Naive thymus-derived CD4-positive, alpha-beta T cell (primary cell): ENCODE measurements at regions of chrX and their contacts with region 1.

Region 1: DNA sequence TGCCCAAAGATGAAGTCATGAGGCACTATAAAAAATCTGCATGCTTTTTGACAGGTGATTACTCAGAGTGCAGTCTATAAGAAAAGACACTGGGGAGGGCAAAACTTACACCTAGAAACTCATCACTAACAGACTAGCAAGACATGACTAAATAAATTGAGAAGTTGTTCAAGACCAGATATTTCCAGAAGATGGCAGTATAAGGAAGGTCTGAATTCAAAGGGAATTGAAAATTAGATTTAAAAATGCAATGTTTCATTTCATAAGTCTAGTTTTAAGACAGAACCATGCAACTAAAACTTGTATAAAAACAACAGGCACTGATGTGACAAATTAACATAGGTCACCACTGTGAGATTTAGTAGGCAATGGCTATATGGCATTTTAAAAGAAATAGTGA is 232.5 kb upstream of the POF1B start:
- DNase-seq: no peak
- ATAC-seq: no peak
- H3K4me3 ChIP-seq: no peak overlapping the region
- H3K4me3 Mint-ChIP-seq: no peak overlapping the region
- H3K27ac ChIP-seq: no peak overlapping the region
- H3K27ac Mint-ChIP-seq: no peak overlapping the region
- H3K4me1 ChIP-seq: no peaks in the 10 kb centered on the region
- H3K4me1 Mint-ChIP-seq: no peaks in the 10 kb centered on the region
- H3K27me3 ChIP-seq: no peaks in the 10 kb centered on the region
- H3K27me3 Mint-ChIP-seq: no peaks in the 10 kb centered on the region

Region 2: GRCh38 chrX:86133761-86134160 is 521.8 kb after region 1 on chrX:
- CTCF ChIA-PET with region 1: no interaction called
- POLR2A ChIA-PET with region 1: no interaction called
- intact Hi-C with region 1: no loop called
- DNase-seq: no peak
- ATAC-seq: no peak
- H3K4me3 ChIP-seq: no peak overlapping the region
- H3K4me3 Mint-ChIP-seq: no peak overlapping the region
- H3K27ac ChIP-seq: no peak overlapping the region
- H3K27ac Mint-ChIP-seq: no peak overlapping the region
- H3K4me1 ChIP-seq: no peaks in the 10 kb centered on the region
- H3K4me1 Mint-ChIP-seq: peaks cover 0 to 4% (median 0%) of the 10 kb centered on the region in 7 donors
- H3K27me3 ChIP-seq: no peaks in the 10 kb centered on the region
- H3K27me3 Mint-ChIP-seq: peaks cover 0 to 8% (median 2%) of the 10 kb centered on the region in 5 donors

Region 3: DNA sequence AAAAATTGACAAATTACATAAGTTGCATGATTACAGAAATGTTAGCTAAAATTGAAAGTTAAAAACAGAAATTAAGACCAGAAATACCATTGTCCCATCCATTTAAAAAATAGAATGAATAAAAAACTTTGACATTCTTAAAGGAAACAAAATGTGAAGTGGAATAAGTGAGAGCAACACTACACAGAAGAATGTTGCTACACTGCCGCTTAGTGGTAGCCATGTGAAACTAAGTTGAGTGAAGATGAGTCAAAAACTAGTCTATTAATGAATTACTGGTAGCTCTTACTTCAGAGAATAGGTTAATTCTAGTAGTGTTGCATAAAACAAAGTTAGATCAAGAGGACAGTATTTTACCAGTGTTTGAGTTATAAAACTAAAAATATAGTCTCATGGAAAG is 1334.6 kb after region 1 on chrX:
- CTCF ChIA-PET with region 1: no interaction called
- POLR2A ChIA-PET with region 1: no interaction called
- intact Hi-C with region 1: loop called in 1 of 2 experiments (anchors 5 kb)
- DNase-seq: peak in 1 of 9 donors; percentile 1
- ATAC-seq: no peak
- H3K4me3 ChIP-seq: no peak overlapping the region
- H3K4me3 Mint-ChIP-seq: no peak overlapping the region
- H3K27ac ChIP-seq: no peak overlapping the region
- H3K27ac Mint-ChIP-seq: no peak overlapping the region
- H3K4me1 ChIP-seq: no peaks in the 10 kb centered on the region
- H3K4me1 Mint-ChIP-seq: no peaks in the 10 kb centered on the region
- H3K27me3 ChIP-seq: no peaks in the 10 kb centered on the region
- H3K27me3 Mint-ChIP-seq: no peaks in the 10 kb centered on the region